Mucosa of descending colon (tissue), 3 donors: ENCODE measurements at regions of chr5 and their contacts with region 1.

Region 1: DNA sequence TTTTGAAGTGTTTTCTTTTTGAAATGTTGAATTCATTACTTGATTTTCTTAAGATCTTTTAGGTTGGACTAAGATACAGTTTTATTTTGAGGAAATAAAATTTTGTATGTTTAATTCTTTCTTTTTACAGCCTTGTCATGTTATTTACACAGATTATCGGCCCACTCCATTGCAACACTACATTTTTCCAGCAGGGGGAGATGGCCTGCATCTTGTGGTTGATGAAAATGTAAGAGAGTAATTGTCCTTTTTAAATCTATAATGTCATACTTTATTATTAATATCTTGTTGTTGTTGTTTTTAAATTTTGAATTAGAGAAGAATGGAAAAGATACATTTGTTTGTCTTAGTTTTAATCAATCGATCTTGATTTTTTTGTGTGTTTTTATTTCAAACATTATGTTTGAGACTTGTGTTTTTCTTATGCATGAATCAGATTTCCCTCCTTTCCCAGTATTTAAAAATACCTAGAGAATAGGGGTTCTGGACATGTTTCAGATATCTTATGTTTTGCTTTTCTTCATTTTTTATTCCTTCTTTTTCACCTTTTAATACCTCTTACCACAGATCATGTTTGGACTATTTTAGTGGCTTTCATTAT is 36.7 kb downstream of the MTREX start:
- DNase-seq: peak in 2 of 3 donors; percentile 43 to 90
- ATAC-seq: peak; percentile 67
- H3K4me3 ChIP-seq: no peak overlapping the region
- H3K4me1 ChIP-seq: peaks cover 6% of the 10 kb centered on the region
- CTCF ChIP-seq: peak; percentile 86

Region 2: GRCh38 chr5:55241746-55242145 is 102.7 kb before region 1 on chr5:
- intact Hi-C with region 1: no loop called
- DNase-seq: no peak
- ATAC-seq: no peak
- H3K4me3 ChIP-seq: no peak overlapping the region
- H3K4me1 ChIP-seq: no peaks in the 10 kb centered on the region
- CTCF ChIP-seq: no peak

Region 3: DNA sequence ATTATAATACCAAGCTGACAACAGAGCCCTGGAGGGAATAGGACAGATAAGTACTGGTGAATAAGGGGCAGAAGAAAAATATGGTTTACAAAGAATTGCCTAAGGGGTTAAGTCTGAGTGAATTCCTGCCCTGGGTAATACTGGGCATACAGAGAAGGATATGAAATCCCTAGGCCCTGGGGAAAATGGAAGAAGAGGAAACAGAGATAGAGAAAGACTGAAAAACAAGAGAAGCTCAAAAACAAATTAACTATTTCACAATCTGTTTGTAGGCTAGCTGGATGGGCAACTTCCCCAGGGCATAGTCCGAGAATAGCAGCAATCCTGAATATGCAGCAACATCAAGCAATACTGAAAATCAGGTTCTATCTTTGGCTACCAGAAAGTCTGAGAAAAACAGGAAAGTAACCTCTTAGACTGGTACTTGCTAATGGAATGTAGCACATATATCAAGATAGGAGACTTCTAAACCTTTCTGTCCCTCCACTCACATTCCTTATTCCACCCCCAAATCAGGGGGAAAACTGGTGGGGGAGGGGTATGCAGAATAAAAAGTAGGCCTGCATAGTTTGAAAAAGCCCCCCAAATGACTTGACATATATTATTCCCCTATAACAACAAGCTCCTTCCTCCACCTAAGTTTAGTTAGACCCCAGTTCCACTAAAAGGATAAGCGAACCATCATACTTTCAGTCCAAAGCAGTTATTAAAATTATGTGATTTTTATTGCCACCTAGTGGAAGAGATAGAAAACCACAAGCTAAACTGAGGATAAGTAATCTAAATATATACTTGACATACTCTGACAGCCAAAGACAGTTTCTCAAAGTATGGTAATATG is 347.0 kb after region 1 on chr5:
- intact Hi-C with region 1: loop called in 1 of 2 experiments (anchors 5 kb)
- DNase-seq: no peak
- ATAC-seq: peak; percentile 67
- H3K4me3 ChIP-seq: no peak overlapping the region
- H3K4me1 ChIP-seq: peaks cover 4% of the 10 kb centered on the region
- CTCF ChIP-seq: no peak